Ascending aorta (tissue), 2 donors: ENCODE measurements at regions of chr17 and their contacts with region 1.

Region 1: DNA sequence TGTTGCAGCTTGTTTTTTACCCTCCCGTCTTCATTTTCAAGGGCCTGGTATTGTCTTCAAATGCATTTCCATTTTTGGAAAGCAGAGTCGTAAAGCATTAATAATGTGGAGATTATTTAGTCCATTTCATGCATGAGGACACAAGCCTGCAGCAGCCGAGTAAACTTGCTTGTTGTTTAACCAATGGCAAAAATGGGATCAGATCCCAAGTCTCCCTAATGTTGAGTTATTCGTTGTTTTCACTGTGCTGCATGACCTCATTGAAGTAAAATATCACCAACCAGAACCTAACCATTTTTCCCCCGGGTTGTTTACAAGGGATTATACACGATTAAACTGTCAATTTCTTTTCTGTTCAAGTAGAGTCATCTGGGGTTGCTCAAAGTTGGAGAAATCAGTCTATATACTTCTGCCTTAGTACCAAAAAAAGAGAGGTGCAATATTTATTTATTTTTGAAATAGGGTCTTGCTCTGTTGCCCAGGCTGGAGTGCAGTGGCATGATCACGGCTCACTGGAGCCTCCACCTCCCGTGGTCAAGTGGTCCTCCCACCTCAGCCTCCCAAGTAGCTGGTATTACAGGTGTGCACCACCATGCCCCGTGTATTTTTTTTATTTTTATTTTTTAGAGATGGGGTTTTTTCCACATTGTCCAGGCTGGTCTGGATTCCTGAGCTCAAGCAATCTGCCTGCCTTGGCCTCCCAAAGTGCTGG is 12.4 kb downstream of the AMZ2 start:
- DNase-seq: no peak
- H3K4me3 ChIP-seq: no peak overlapping the region
- H3K27ac ChIP-seq: no peak overlapping the region
- H3K4me1 ChIP-seq: peaks cover 0 to 5% of the 10 kb centered on the region in 2 donors
- H3K27me3 ChIP-seq: no peaks in the 10 kb centered on the region
- CTCF ChIP-seq: no peak

Region 2: DNA sequence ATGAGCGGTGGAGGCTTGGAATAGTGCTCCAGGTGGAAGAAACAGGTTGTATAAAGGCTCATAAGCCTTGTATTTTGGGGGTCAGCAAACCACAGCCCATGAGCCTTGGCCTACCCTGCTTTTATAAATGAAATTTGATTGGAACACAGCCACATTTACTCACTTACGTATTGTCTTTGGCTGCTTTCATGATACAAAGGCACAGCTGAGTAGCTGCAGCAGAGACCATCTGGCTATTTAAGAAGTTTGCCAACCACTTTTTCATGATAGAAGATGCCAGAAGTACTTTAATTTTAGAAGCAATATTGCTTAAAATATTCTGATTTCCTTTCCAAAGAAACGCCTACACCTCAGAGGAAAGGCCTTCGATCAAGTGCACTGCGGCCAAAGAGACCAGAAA is 337.7 kb before region 1 on chr17:
- intact Hi-C with region 1: no loop called
- DNase-seq: no peak
- H3K4me3 ChIP-seq: no peak overlapping the region
- H3K27ac ChIP-seq: peak overlapping the region; percentile 7 to 27
- H3K4me1 ChIP-seq: peaks cover 0 to 7% of the 10 kb centered on the region in 2 donors
- H3K27me3 ChIP-seq: no peaks in the 10 kb centered on the region
- CTCF ChIP-seq: no peak

Region 3: DNA sequence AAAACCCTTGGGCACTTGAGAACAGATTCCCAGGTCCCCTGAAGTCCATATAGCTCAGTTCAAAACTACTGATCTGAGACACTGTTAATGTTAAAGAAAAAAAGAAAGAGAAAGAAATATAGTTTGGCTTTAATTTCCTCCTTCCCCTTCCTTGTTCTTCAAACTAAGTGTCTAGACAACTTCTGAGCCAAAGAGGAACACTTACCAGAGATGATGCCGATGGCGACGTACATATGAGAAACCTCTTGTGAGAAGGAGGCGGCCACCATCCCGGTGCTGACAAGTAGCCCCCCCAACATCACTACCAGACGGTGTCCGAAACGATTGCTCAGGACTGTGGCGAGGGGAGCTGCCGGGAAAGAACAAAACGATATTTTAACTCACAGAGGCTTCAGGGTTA is 13.5 kb after region 1 on chr17:
- intact Hi-C with region 1: no loop called
- DNase-seq: no peak
- H3K4me3 ChIP-seq: no peak overlapping the region
- H3K27ac ChIP-seq: no peak overlapping the region
- H3K4me1 ChIP-seq: no peaks in the 10 kb centered on the region
- H3K27me3 ChIP-seq: no peaks in the 10 kb centered on the region
- CTCF ChIP-seq: no peak

Region 4: GRCh38 chr17:68346448-68346847 is 86.2 kb after region 1 on chr17:
- intact Hi-C with region 1: no loop called
- DNase-seq: peak; percentile 32 to 68
- H3K4me3 ChIP-seq: no peak overlapping the region
- H3K27ac ChIP-seq: no peak overlapping the region
- H3K4me1 ChIP-seq: no peaks in the 10 kb centered on the region
- H3K27me3 ChIP-seq: no peaks in the 10 kb centered on the region
- CTCF ChIP-seq: no peak

Region 5: GRCh38 chr17:68398691-68399637 is 138.8 kb after region 1 on chr17:
- intact Hi-C with region 1: loop called (anchors 5 kb)
- DNase-seq: no peak
- H3K4me3 ChIP-seq: no peak overlapping the region
- H3K27ac ChIP-seq: no peak overlapping the region
- H3K4me1 ChIP-seq: no peaks in the 10 kb centered on the region
- H3K27me3 ChIP-seq: no peaks in the 10 kb centered on the region
- CTCF ChIP-seq: peak; percentile 49 to 75 (median 54)

Region 6: GRCh38 chr17:68435876-68436842 is 176.0 kb after region 1 on chr17:
- intact Hi-C with region 1: loop called (anchors 1 kb)
- DNase-seq: peak in 1 of 2 donors; percentile 85
- H3K4me3 ChIP-seq: no peak overlapping the region
- H3K27ac ChIP-seq: no peak overlapping the region
- H3K4me1 ChIP-seq: no peaks in the 10 kb centered on the region
- H3K27me3 ChIP-seq: no peaks in the 10 kb centered on the region
- CTCF ChIP-seq: peak; percentile 78 to 89 (median 87)